ENCODE measurements at regions of chr2 and their contacts with region 1.

Region 1: DNA sequence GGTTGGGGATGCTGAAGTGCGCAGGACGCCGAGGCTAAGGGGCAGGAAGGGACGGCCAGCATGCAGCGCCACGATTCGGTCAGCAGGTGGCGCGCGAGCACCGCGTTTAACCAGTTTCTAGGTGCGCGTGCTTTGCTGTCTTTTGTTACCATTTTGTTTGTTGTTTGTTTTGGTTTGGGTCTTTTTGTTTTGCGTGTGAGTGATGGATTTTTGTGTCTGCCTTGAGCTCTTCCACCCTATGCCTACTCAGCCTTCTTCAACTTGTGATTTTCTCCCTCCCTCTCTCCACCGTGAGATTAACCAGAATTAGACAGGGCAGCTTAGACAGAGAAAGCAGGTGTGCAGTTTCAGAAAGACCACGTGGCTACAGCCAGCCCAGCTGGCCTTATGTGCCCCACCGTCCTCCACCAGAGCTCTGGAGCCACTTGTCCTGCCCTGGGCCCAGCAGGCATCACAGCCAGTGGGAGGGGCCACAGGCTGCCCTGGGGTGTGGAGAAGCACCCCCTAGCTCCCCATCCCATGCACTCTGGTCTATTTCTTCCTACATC is 180.2 kb downstream of the RNF144A start:
- DNase-seq: peak; percentile 81
- ATAC-seq: peak; percentile 97
- H3K4me3 Mint-ChIP-seq: peak overlapping the region; percentile 59
- H3K27ac Mint-ChIP-seq: peak overlapping the region; percentile 62
- H3K4me1 Mint-ChIP-seq: peaks cover 7% of the 10 kb centered on the region
- H3K27me3 Mint-ChIP-seq: no peaks in the 10 kb centered on the region
- CTCF ChIP-seq: peak; percentile 93

Region 2: DNA sequence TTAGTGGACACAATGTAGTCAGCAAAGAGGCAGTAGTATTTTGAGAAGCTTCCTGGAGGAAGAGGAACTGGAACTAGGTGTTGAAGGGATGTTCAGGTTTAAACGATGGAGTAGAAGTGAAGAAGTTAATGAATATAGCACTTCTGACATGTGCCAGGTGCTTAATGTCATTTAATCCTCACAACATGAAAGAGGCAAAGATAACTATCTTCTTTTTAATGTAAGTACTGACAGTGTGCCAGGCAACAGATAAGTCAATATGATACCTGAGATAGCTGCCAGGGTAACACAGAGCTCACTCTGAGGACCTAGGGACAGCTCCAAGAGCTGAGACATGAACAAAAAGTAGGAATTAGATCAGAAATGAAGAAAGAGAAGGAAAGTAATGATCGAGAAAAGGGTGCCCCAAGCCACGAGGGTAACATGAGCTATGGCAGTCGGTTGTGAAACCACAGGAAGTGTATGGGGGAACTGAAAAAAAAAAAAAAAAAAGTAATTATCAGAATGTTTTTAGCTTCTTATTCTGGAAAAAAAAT is 39.5 kb before region 1 on chr2:
- CTCF ChIA-PET with region 1: interaction called, 10 read pairs
- POLR2A ChIA-PET with region 1: interaction called, 3 read pairs
- intact Hi-C with region 1: no loop called
- DNase-seq: peak; percentile 22
- ATAC-seq: peak; percentile 49
- H3K4me3 Mint-ChIP-seq: no peak overlapping the region
- H3K27ac Mint-ChIP-seq: peak overlapping the region; percentile 79
- H3K4me1 Mint-ChIP-seq: peaks cover 16% of the 10 kb centered on the region
- H3K27me3 Mint-ChIP-seq: no peaks in the 10 kb centered on the region
- CTCF ChIP-seq: no peak

Measured in activated CD8-positive, alpha-beta T cell treated with anti-CD3 and anti-CD28 coated beads for 36 hours (primary cell).